H1 (cell line): ENCODE measurements at regions of chr4 and their contacts with region 1.

Region 1: DNA sequence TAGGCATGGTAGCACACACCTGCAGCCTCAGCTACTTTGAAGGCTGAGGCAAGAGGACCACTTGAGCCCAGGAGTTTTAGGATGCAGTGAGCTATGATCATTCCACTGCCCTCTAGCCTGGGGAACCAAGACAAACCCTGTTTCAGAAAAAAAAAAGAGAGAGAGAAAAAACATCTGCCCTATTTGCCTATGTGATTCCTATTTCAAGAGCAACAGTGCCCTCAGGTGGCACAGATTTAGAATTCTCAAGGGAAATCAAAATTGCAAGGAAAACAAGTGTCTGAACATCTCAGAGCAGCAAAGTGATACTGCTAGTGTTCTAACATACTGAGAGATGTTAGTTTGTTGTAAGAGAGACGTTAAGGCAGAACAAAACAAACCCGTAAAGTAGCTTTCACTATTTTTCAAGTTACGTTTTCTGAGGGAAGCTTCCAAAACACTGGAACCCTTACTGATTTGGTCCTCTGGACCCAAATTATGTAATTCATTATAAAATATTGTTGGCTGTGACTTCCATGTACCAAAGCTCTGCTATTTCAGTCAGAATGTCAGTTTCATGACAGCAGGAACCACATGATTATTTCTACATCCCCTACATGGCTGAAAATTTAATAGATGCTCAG is 7.9 kb downstream of the BDH2 start:
- DNase-seq: no peak
- H3K4me3 ChIP-seq: no peak overlapping the region
- H3K27ac ChIP-seq: no peak overlapping the region
- H3K4me1 ChIP-seq: no peaks in the 10 kb centered on the region
- H3K27me3 ChIP-seq: no peaks in the 10 kb centered on the region
- CTCF ChIP-seq: peak in 2 of 3 experiments; percentile 61 to 66; a peak in 3 of 4 replicates
- EP300 ChIP-seq: no peak
- POLR2A ChIP-seq: no peak
- RAD21 ChIP-seq: peak; percentile 82 to 85

Region 2: DNA sequence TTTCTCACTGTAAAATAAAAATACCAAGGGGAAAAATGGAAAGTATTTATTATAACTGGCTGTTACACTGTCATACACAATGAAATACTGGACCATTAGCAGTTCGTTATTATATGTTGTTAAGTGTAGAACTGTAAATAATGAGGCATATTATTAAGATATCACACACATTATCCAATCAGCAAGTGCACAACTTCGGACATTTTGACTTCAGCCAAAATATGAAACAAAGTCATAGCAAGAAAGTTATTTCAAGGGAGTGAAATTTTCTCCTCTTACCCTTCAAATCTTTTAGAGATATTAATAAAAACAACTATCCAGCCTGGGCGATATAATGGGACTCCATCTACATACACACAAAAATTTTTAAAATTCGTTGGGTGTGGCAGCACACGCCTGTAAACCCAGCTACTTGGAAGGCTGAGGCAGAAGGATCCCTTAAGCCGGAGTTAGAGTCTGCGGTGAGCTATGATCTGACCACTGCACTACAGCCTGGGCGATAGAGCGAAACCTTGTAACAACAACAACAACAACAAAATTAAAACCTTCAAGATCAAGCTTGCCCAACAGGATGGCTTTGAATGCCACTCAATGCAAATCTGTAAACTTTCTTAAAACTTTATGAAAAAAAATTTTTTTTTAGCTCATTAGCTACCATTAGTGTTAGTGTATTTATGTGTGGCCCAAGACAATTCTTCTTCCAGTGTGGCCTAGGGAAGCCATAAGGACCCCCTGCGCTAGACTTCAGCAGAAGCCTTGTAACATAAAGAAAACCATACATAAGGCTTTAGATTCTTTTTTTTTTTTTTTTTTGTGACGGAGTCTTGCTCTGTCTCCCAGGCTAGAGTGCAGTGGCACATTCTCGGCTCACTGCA is 224.2 kb before region 1 on chr4:
- CTCF ChIA-PET with region 1: no interaction called
- POLR2A ChIA-PET with region 1: no interaction called
- DNase-seq: no peak
- H3K4me3 ChIP-seq: peak overlapping the region; percentile 73 to 86 (median 78); a peak in 5 of 8 replicates
- H3K27ac ChIP-seq: no peak overlapping the region
- H3K4me1 ChIP-seq: 0 out of 7 replicates have a peak, but pooled peaks cover 0 to 2% (median 0%) of the 10 kb centered on the region in 4 experiments
- H3K27me3 ChIP-seq: no peaks in the 10 kb centered on the region
- CTCF ChIP-seq: no peak
- EP300 ChIP-seq: no peak
- POLR2A ChIP-seq: no peak
- RAD21 ChIP-seq: no peak

Region 3: GRCh38 chr4:103008875-103009729 is 82.6 kb before region 1 on chr4:
- CTCF ChIA-PET with region 1: interaction called, 15 read pairs
- POLR2A ChIA-PET with region 1: no interaction called
- DNase-seq: no peak
- H3K4me3 ChIP-seq: no peak overlapping the region
- H3K27ac ChIP-seq: no peak overlapping the region
- H3K4me1 ChIP-seq: no peaks in the 10 kb centered on the region
- H3K27me3 ChIP-seq: no peaks in the 10 kb centered on the region
- CTCF ChIP-seq: peak in 2 of 3 experiments; percentile 58 to 76; a peak in 2 of 4 replicates
- EP300 ChIP-seq: no peak
- POLR2A ChIP-seq: no peak
- RAD21 ChIP-seq: peak; percentile 91 to 97

Region 4: DNA sequence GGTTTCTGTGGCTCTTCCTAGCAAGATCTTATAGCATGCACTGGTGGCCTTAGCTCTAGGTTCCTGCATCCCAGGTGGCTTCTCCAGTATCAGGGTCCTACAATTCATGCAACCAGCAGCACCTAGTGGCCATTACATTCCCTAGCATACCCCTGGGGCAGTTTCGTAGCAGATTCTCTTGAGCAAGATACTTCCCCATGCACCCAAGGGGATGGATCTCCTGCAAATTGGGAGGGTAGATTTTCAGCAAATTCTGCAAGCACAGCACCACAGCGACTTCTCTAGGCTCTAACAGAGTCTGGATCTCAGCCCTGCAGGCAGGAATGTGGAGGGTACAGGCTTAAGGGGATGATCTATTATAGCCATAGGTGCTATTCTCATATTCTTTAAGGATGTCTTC is 59.1 kb before region 1 on chr4:
- CTCF ChIA-PET with region 1: interaction called, 11 read pairs
- POLR2A ChIA-PET with region 1: no interaction called
- DNase-seq: peak in 1 of 2 experiments; percentile 63
- H3K4me3 ChIP-seq: no peak overlapping the region
- H3K27ac ChIP-seq: no peak overlapping the region
- H3K4me1 ChIP-seq: no peaks in the 10 kb centered on the region
- H3K27me3 ChIP-seq: no peaks in the 10 kb centered on the region
- CTCF ChIP-seq: peak; percentile 57 to 98 (median 83)
- EP300 ChIP-seq: no peak
- POLR2A ChIP-seq: no peak
- RAD21 ChIP-seq: peak; percentile 94 to 95

Region 5: DNA sequence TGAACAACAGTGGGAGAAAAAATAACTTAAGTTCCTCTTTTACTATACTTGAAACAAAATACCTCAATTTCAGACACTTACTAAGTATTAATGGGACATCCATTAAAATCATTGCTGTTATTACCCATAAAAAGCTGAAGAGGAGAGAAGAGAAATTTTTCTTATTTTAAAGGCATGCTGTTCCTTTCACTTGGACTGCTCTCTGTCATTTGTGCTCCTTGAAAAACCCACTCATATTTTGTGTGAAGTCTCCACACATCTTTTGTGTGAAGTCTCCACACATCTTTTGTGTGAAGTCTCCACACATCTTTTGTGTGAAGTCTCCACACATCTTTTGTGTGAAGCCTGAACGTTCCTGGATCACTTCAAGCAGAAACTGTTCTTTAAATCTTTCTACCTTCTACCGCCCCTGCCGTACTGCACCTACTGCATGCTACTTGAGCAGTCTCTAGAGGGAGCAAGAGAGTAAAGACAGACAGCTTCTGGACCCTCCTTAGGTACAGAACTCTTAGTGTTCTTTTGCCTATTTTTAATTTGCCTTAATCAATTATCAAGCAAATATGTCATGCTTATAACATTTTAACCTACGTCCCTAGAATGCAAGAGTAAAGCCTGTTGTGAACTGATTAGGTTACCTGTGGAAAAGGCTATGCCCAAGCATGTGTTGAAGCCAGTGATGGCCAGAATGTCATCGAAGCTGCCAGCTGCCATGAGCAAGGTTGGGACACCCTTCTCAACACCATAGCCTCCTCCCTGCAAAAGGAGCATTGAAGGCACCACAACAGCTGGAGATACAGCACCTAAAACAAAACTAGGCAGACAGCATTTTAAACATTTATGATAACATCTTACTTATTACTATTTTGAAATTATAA is 45.1 kb before region 1 on chr4:
- CTCF ChIA-PET with region 1: interaction called, 11 read pairs
- POLR2A ChIA-PET with region 1: no interaction called
- DNase-seq: no peak
- H3K4me3 ChIP-seq: no peak overlapping the region
- H3K27ac ChIP-seq: no peak overlapping the region
- H3K4me1 ChIP-seq: no peaks in the 10 kb centered on the region
- H3K27me3 ChIP-seq: no peaks in the 10 kb centered on the region
- CTCF ChIP-seq: peak in 2 of 3 experiments; percentile 71 to 77; a peak in 3 of 4 replicates
- EP300 ChIP-seq: no peak
- POLR2A ChIP-seq: no peak
- RAD21 ChIP-seq: peak; percentile 58 to 62

Region 6: DNA sequence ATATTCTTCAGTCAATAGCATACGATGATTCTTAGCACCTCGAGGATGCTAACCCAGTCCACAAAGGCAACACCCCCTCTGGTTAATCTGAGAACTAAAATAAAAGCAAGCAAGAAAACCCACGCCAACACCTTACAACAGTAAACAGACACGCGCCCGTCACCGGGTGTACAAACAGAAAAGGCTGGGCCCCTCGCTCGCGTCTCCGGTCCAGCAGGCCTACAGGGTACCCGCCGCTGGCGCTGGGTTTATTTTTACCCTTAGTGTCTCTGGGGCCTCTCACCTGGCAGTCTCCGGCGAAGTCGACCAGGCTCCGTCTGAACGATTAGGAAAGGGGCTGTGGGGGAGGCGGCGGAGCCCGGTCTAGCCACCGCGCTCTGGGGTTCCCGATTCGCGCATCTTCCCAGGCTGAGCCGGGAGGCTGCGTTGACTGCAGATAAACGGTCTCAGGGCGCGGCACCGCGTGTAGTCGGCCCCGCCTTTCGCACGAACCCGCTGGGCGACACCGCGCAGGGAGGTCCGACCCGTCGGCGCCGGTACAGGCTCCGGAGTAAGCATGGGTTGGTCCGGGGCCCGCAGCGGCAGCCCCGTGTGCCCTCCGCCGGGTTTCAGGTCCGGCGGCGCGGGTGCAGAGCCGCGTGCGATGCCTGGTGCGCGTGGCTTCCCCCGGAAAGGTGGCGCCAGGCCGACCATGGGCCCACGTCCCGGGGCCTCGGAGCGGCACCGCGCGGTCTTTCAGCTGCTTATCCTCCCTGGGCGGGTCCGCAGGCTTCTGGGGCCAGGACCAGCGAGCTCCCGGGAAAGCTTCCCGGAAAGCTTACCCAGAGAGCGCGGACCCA is 15.6 kb before region 1 on chr4:
- CTCF ChIA-PET with region 1: interaction called, 47 read pairs
- POLR2A ChIA-PET with region 1: interaction called, 4 read pairs
- DNase-seq: peak in 1 of 2 experiments; percentile 82
- H3K4me3 ChIP-seq: peak overlapping the region; percentile 54 to 78 (median 76)
- H3K27ac ChIP-seq: no peak overlapping the region
- H3K4me1 ChIP-seq: peaks cover 0 to 3% (median under 1%) of the 10 kb centered on the region in 4 experiments; a peak in 2 of 7 replicates
- H3K27me3 ChIP-seq: peaks cover 0 to 15% (median 13%) of the 10 kb centered on the region in 4 experiments; a peak in 4 of 7 replicates
- CTCF ChIP-seq: no peak
- EP300 ChIP-seq: no peak
- POLR2A ChIP-seq: peak; percentile 61 to 76; a peak in 2 of 3 replicates
- RAD21 ChIP-seq: no peak

Region 7: GRCh38 chr4:103198111-103198765 is 106.5 kb after region 1 on chr4 and contains the start of gene CENPE:
- CTCF ChIA-PET with region 1: no interaction called
- POLR2A ChIA-PET with region 1: no interaction called
- DNase-seq: peak; percentile 69 to 97
- H3K4me3 ChIP-seq: peak within 1 kb of the TSS; percentile 82 to 90 (median 90)
- H3K27ac ChIP-seq: no peak within 1 kb of the TSS
- H3K4me1 ChIP-seq: peaks cover 0 to 1% (median 0%) of the 10 kb centered on the region in 4 experiments; a peak in 1 of 7 replicates
- H3K27me3 ChIP-seq: no peaks in the 10 kb centered on the region
- CTCF ChIP-seq: no peak
- EP300 ChIP-seq: peak in 1 of 2 experiments; percentile 100; a peak in 2 of 3 replicates
- POLR2A ChIP-seq: peak; percentile 44 to 82
- RAD21 ChIP-seq: no peak
- total RNA-seq, gene CENPE: 49.0 and 51.0 TPM in 2 replicates